Endothelial cell of umbilical vein (primary cell): ENCODE measurements at regions of chr9 and their contacts with region 1.

Region 1: GRCh38 chr9:121213136-121213806 is 11.6 kb upstream of the RAB14 start:
- DNase-seq: peak; percentile 84
- H3K4me3 ChIP-seq: no peak overlapping the region
- H3K27ac ChIP-seq: no peak overlapping the region
- H3K4me1 ChIP-seq: peaks cover 5% of the 10 kb centered on the region
- H3K27me3 ChIP-seq: no peaks in the 10 kb centered on the region
- CTCF ChIP-seq: peak; percentile 96 to 98
- POLR2A ChIP-seq: no peak

Region 2: DNA sequence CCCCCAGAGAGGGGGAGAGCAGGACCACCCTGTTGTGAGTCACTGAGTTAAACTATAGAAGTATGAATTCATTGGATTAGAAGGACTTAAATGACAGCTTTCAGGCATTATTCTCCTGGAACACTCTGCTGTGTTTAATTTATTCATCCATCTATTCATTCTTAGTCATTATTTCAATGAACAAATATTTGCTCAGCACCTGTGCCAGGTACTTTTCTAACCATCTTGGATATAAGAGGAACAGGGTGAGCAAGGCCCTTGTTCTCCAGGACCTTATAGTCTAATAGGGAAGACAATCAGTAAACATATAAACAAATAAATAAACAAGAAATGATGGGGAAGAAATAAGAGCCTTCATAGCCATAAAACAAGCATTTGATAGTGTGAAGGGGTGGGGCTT is 1360.1 kb before region 1 on chr9:
- CTCF ChIA-PET with region 1: no interaction called
- POLR2A ChIA-PET with region 1: no interaction called
- dilution Hi-C with region 1: no loop called
- intact Hi-C with region 1: no loop called
- DNase-seq: no peak
- H3K4me3 ChIP-seq: no peak overlapping the region
- H3K27ac ChIP-seq: no peak overlapping the region
- H3K4me1 ChIP-seq: no peaks in the 10 kb centered on the region
- H3K27me3 ChIP-seq: no peaks in the 10 kb centered on the region
- CTCF ChIP-seq: no peak
- POLR2A ChIP-seq: no peak

Region 3: DNA sequence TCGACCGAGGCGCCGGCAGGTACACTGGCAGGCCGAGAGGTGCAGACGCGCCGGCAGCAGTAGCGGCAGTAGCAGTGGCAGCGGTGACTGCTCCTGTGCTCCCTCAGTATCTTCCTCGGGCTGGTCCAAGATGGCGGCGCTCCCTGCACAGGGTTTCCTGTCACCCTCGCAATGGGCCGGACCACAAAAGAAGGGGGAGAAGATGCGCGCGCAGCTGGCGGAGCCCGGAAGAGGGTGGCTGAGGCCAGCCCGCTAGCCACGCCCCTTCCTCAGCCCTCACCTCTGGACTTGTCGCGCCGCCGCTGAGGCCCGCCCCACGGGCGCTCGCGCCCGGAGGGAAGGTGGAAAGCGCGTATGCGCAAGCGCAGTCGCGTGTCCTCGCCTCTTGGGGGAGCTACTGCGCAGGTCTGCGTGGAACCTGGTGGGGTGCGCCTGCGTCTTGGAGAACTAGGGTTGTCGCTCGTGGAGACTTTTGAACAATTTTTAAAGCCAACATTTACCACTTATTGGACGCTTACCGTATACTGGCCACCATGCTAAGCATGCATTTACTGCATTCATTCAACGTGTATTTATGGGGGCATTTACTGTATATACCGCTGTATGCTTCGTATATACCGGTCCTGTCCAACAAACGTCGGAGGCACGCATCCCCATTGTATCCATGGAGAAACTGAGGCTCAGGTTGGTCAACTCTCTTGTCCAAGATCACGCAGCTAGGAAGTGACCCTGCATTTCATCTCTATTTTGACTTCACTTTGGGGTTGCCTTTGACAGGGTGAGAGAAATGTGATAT is 11.3 kb before region 1 on chr9 and contains the start of gene RAB14:
- CTCF ChIA-PET with region 1: interaction called, 12 read pairs
- POLR2A ChIA-PET with region 1: no interaction called
- dilution Hi-C with region 1: no loop called
- intact Hi-C with region 1: loop called (anchors 1 kb)
- DNase-seq: peak; percentile 98
- H3K4me3 ChIP-seq: peak within 1 kb of the TSS; percentile 85 to 94 (median 86)
- H3K27ac ChIP-seq: peak within 1 kb of the TSS; percentile 59
- H3K4me1 ChIP-seq: peaks cover 33% of the 10 kb centered on the region
- H3K27me3 ChIP-seq: no peaks in the 10 kb centered on the region
- CTCF ChIP-seq: peak; percentile 49 to 69
- POLR2A ChIP-seq: peak; percentile 90
- total RNA-seq, gene RAB14: 76.4 and 79.3 TPM in 2 replicates

Region 4: GRCh38 chr9:121278535-121279261 is 65.4 kb after region 1 on chr9:
- CTCF ChIA-PET with region 1: interaction called, 35 read pairs
- POLR2A ChIA-PET with region 1: no interaction called
- dilution Hi-C with region 1: no loop called
- intact Hi-C with region 1: loop called (anchors 1 kb)
- DNase-seq: peak; percentile 84
- H3K4me3 ChIP-seq: peak overlapping the region in 1 of 3 experiments; percentile 8
- H3K27ac ChIP-seq: peak overlapping the region; percentile 73
- H3K4me1 ChIP-seq: peaks cover 44% of the 10 kb centered on the region
- H3K27me3 ChIP-seq: no peaks in the 10 kb centered on the region
- CTCF ChIP-seq: peak; percentile 80 to 84
- POLR2A ChIP-seq: no peak

Region 5: DNA sequence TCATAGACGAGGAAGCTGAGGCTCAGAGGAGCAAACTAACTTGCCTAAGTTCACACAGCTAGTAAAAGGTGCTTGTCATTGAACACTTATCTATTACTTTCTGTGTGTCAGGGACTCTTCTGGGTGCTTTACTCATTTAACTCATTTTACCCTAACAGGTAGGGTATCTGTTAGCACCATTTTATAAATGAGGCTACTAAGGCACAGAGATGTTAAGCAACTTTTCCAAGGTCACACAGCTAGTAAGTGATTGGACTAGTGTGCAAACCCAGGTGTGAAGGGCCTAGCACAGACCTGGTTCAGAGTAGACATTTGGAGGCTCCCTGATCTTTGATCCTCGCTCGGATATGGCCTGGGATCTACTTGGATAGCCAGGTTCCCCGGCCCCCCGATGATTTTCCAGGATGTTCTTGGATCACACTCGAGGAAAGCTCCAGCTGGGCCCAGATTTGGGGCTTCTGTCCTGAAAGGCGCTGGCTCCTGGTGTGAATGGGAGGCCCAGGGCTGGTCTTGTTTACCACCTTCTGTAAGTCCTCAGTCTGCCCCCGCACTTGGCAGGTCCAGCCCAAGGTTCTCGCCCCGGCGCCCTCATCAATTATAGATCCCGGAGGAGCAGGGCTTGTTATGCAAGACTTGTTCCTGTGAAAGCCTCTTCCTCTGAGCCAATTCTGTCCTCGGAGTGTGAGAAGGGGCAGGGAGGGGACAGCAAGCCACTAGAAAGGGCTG is 92.2 kb after region 1 on chr9:
- CTCF ChIA-PET with region 1: interaction called, 10 read pairs
- POLR2A ChIA-PET with region 1: no interaction called
- dilution Hi-C with region 1: no loop called
- intact Hi-C with region 1: no loop called
- DNase-seq: no peak
- H3K4me3 ChIP-seq: no peak overlapping the region
- H3K27ac ChIP-seq: no peak overlapping the region
- H3K4me1 ChIP-seq: no peaks in the 10 kb centered on the region
- H3K27me3 ChIP-seq: no peaks in the 10 kb centered on the region
- CTCF ChIP-seq: no peak
- POLR2A ChIP-seq: no peak

Region 6: DNA sequence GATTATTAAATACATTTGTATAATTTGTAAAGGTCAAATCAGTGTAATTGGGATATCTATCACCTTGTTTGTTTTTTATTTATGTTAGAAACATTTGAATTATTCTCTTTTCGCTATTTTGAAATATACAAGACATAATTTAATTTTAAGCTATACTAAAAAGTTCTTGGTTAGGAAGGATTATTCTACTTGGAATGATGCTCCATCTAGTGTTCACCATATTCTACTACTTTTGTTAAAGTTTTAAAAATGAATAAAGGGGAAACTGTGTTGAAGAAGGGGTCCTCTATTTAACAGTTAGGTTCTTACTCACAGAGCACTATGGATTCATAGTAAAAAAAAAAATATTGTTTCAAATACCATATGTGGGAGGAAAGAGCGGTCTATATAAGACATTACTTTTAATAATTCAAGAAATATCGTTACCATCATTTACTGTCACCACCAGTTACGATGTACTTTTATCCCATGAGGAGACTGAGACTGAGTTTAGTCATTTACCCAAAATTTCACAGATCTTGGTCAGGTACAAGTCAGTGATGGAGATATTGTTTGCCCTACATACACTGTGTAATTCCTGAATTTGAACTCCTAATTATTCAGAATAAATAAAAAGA is 163.1 kb after region 1 on chr9:
- CTCF ChIA-PET with region 1: interaction called, 20 read pairs
- POLR2A ChIA-PET with region 1: no interaction called
- dilution Hi-C with region 1: no loop called
- intact Hi-C with region 1: loop called (anchors 1 kb)
- DNase-seq: peak; percentile 51
- H3K4me3 ChIP-seq: no peak overlapping the region
- H3K27ac ChIP-seq: no peak overlapping the region
- H3K4me1 ChIP-seq: no peaks in the 10 kb centered on the region
- H3K27me3 ChIP-seq: no peaks in the 10 kb centered on the region
- CTCF ChIP-seq: peak in 1 of 2 donors; percentile 17
- POLR2A ChIP-seq: no peak

Region 7: GRCh38 chr9:121498150-121498486 is 284.8 kb after region 1 on chr9:
- CTCF ChIA-PET with region 1: interaction called, 5 read pairs
- POLR2A ChIA-PET with region 1: no interaction called
- dilution Hi-C with region 1: no loop called
- intact Hi-C with region 1: loop called (anchors 5 kb)
- DNase-seq: peak; percentile 83
- H3K4me3 ChIP-seq: no peak overlapping the region
- H3K27ac ChIP-seq: no peak overlapping the region
- H3K4me1 ChIP-seq: peaks cover 16% of the 10 kb centered on the region
- H3K27me3 ChIP-seq: peaks cover 11 to 17% of the 10 kb centered on the region in 2 experiments
- CTCF ChIP-seq: peak; percentile 66 to 68
- POLR2A ChIP-seq: no peak